A549 (cell line): ENCODE measurements at regions of chr12 and their contacts with region 1.

Region 1: GRCh38 chr12:92608151-92609091 is 94.4 kb upstream of the PLEKHG7 start:
- DNase-seq: peak; percentile 27 to 76
- ATAC-seq: peak; percentile 54 to 69; a peak in 3 of 6 replicates
- H3K4me3 ChIP-seq: no peak overlapping the region
- H3K27ac ChIP-seq: peak overlapping the region; percentile 78 to 98
- H3K4me1 ChIP-seq: peaks cover 23% of the 10 kb centered on the region
- CTCF ChIP-seq: peak; percentile 67
- EP300 ChIP-seq: no peak
- POLR2A ChIP-seq: no peak
- RAD21 ChIP-seq: peak; percentile 75 to 82

Region 2: DNA sequence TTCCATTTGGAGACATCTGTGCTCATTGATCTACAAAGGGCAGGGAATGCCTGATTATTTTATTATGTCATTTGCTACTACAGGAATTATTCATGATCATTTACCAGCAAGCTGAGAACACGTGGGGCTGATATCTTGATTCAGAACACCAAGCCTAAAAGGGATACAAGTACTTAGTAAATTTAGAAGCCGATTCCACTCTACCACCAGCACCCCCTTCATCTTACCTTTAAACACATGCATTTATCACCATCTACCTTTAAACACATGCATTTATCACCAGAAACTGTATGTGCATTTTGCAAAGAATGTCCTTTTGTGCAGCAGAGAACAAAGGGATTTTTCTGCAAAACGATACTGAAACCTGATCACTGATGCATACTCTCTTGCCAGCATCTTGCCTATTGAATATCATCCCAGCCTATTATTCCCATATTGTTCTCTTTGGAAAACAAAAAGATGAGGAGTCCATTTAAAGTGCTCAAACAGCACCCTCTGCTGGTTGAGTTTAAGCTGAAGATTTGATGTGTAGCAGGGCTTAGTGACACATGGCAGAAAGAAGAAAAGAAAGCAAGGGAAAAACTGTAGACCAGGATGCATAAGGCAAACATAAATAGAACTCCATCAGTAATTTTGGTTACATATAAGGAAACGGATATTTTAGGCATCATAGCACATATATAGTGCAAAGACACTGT is 38.2 kb before region 1 on chr12:
- CTCF ChIA-PET with region 1: interaction called, 12 read pairs
- POLR2A ChIA-PET with region 1: no interaction called
- DNase-seq: peak; percentile 57 to 88
- ATAC-seq: peak; percentile 78 to 91
- H3K4me3 ChIP-seq: no peak overlapping the region
- H3K27ac ChIP-seq: peak overlapping the region; percentile 49 to 66
- H3K4me1 ChIP-seq: peaks cover 17% of the 10 kb centered on the region
- CTCF ChIP-seq: peak; percentile 97
- EP300 ChIP-seq: no peak
- POLR2A ChIP-seq: no peak
- RAD21 ChIP-seq: peak; percentile 94 to 97